Heart right ventricle (tissue), 16 donors: ENCODE measurements at regions of chr19 and their contacts with region 1.

Region 1: DNA sequence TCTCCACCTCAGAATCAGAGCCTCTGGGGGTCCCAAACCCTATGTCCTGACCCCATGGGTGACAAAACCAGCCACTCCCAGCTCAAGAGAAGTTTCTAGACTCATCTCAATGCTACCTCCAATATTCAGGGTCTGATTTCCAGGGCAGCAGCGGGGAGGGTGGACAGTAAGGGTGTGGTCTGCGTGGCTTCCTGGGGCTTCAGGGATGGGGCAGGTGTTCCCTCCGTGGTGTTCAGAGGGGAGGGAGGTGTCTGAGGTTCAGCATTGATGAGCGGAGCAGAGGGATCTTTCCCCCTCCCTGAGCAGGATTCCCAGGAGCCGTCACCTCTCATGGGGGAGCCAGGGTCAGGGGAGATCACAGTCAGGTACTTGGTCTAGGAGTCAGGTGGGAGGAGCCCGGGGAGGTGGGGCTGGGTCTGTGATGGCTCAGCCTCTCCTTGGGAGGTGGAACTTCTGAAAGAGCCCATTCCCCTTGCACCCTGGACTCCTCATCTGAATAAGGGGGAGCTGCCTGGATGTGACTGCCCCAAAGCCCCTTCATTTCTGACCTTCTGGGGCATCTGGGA is 2.9 kb downstream of the LILRA2 start:
- DNase-seq: no peak
- ATAC-seq: peak in 2 of 8 donors; percentile 12 to 53
- H3K4me3 ChIP-seq: no peak overlapping the region
- H3K27ac ChIP-seq: no peak overlapping the region
- H3K4me1 ChIP-seq: peaks cover 0 to 20% (median 0%) of the 10 kb centered on the region in 9 donors
- H3K27me3 ChIP-seq: peaks cover 0 to 33% (median 7%) of the 10 kb centered on the region in 7 donors
- CTCF ChIP-seq: no peak

Region 2: GRCh38 chr19:54294539-54294938 is 282.0 kb before region 1 on chr19:
- intact Hi-C with region 1: loop called in 1 of 10 experiments (anchors 5 kb)
- DNase-seq: no peak
- ATAC-seq: no peak
- H3K4me3 ChIP-seq: no peak overlapping the region
- H3K27ac ChIP-seq: no peak overlapping the region
- H3K4me1 ChIP-seq: peaks cover 0 to 7% (median 0%) of the 10 kb centered on the region in 9 donors
- H3K27me3 ChIP-seq: peaks cover 0 to 41% (median 16%) of the 10 kb centered on the region in 7 donors
- CTCF ChIP-seq: no peak

Region 3: GRCh38 chr19:54644056-54644455 is 67.6 kb after region 1 on chr19:
- intact Hi-C with region 1: no loop called
- DNase-seq: peak in 1 of 2 donors; percentile 33
- ATAC-seq: peak in 7 of 8 donors; percentile 64 to 92 (median 73)
- H3K4me3 ChIP-seq: peak overlapping the region in 1 of 10 donors; percentile 26
- H3K27ac ChIP-seq: peak overlapping the region in 1 of 10 donors; percentile 68
- H3K4me1 ChIP-seq: no peaks in the 10 kb centered on the region
- H3K27me3 ChIP-seq: peaks cover 0 to 23% (median 4%) of the 10 kb centered on the region in 7 donors
- CTCF ChIP-seq: no peak

Region 4: GRCh38 chr19:54707962-54708361 is 131.5 kb after region 1 on chr19:
- intact Hi-C with region 1: no loop called
- DNase-seq: no peak
- ATAC-seq: no peak
- H3K4me3 ChIP-seq: no peak overlapping the region
- H3K27ac ChIP-seq: no peak overlapping the region
- H3K4me1 ChIP-seq: no peaks in the 10 kb centered on the region
- H3K27me3 ChIP-seq: peaks cover 0 to 22% (median 8%) of the 10 kb centered on the region in 7 donors
- CTCF ChIP-seq: no peak

Region 5: DNA sequence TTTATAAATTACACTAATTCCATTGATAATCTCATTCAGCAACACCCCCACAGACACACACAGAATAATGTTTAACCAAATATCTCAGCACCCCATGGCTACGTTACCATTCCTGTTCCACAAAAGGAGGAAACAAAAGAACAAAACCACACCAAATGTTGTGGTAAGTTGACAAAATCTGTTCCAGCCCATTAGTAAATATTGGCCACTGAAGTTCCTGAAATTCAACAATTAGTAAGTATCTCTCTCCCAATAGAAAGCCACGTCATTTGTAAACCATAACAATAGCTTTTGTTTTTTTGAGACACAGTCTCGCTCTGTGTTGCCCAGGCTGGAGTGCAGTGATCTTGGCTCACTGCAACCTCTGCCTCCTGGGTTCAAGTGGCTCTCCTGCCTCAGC is 295.2 kb after region 1 on chr19:
- intact Hi-C with region 1: no loop called
- DNase-seq: no peak
- ATAC-seq: no peak
- H3K4me3 ChIP-seq: no peak overlapping the region
- H3K27ac ChIP-seq: peak overlapping the region in 1 of 10 donors; percentile 14
- H3K4me1 ChIP-seq: peaks cover 0 to 31% (median 0%) of the 10 kb centered on the region in 9 donors
- H3K27me3 ChIP-seq: peaks cover 0 to 11% (median 2%) of the 10 kb centered on the region in 7 donors
- CTCF ChIP-seq: no peak